ENCODE measurements at regions of chr20 and their contacts with region 1.

Region 1: DNA sequence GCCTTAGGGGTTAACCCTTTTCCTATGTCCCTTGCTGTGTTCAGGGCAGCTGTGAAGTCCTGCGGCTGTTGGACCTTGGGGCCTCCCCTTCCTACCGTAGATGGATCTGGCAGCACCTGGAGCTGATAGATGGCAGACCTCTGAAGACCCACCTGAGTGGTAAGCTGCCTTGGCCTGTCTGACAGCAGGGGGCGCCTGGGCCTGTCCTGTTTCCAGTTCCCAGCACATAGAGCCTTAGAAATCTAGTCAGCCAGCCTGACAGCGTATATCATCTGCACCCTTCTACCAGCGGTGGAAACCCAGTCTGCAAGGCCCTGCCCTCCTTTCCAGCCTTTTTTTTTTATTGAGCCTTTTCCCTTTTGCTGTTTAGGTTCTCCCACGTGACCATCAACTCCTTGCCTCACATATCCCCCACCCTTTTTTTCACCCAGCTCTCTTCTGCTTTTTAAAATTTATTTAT is 26.6 kb downstream of the CNBD2 start:
- DNase-seq: peak; percentile 76
- ATAC-seq: peak; percentile 94
- H3K4me3 ChIP-seq: no peak overlapping the region
- H3K27ac ChIP-seq: no peak overlapping the region
- H3K4me1 ChIP-seq: no peaks in the 10 kb centered on the region
- H3K27me3 ChIP-seq: peaks cover 3% of the 10 kb centered on the region; the same call in 1 of the 2 replicates
- CTCF ChIP-seq: peak; percentile 84
- POLR2A ChIP-seq: no peak
- RAD21 ChIP-seq: peak; percentile 92

Region 2: DNA sequence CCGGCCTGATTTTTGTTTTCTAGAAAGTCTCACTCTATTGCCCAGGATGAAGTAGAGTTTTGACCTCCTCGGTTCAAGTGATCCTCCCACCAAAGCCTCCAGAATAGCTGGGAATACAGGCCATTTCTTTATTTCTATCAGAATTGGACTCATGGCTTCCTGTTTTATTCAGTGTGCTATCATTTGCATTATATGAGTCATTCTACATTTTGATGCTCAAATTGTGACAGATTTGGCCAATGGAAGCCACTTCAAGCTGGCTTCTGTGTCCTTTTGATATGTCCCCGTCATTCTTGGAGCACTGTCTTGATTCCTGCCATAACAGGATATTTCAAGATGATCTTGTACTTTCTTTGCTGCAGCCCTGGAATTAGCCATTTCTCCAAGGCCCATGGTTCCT is 48.4 kb after region 1 on chr20:
- CTCF ChIA-PET with region 1: interaction called, 3 read pairs
- POLR2A ChIA-PET with region 1: interaction called, 15 read pairs
- dilution Hi-C with region 1: no loop called
- in situ Hi-C with region 1: no loop called
- intact Hi-C with region 1: no loop called
- DNase-seq: no peak
- ATAC-seq: no peak
- H3K4me3 ChIP-seq: no peak overlapping the region
- H3K27ac ChIP-seq: no peak overlapping the region
- H3K4me1 ChIP-seq: no peaks in the 10 kb centered on the region
- H3K27me3 ChIP-seq: no peaks in the 10 kb centered on the region
- CTCF ChIP-seq: no peak
- POLR2A ChIP-seq: no peak
- RAD21 ChIP-seq: no peak

Region 3: DNA sequence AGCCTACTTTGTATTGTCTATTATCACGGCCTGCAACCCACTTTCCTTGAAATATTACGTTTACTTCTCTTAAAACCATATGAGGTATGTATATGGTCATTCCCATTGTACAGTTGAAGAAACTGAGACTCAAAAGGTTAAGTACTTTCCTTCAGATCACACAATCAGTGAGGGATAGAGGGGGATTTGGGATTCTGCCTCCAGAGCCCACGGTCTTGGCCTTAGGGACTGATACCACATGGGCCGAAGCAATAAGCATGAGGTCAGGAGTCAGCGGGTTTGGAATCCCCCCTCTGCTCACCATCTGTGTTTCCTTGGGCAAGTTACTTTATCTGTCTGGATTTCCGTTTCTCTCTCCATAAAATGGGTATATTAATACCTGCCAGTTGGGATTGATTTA is 140.1 kb after region 1 on chr20:
- CTCF ChIA-PET with region 1: interaction called, 90 read pairs
- POLR2A ChIA-PET with region 1: interaction called, 4 read pairs
- dilution Hi-C with region 1: no loop called
- in situ Hi-C with region 1: loop called (anchors 5 kb)
- intact Hi-C with region 1: loop called (anchors 1 kb)
- DNase-seq: no peak
- ATAC-seq: no peak
- H3K4me3 ChIP-seq: no peak overlapping the region
- H3K27ac ChIP-seq: no peak overlapping the region
- H3K4me1 ChIP-seq: no peaks in the 10 kb centered on the region
- H3K27me3 ChIP-seq: no peaks in the 10 kb centered on the region
- CTCF ChIP-seq: no peak
- POLR2A ChIP-seq: no peak
- RAD21 ChIP-seq: no peak

Region 4: DNA sequence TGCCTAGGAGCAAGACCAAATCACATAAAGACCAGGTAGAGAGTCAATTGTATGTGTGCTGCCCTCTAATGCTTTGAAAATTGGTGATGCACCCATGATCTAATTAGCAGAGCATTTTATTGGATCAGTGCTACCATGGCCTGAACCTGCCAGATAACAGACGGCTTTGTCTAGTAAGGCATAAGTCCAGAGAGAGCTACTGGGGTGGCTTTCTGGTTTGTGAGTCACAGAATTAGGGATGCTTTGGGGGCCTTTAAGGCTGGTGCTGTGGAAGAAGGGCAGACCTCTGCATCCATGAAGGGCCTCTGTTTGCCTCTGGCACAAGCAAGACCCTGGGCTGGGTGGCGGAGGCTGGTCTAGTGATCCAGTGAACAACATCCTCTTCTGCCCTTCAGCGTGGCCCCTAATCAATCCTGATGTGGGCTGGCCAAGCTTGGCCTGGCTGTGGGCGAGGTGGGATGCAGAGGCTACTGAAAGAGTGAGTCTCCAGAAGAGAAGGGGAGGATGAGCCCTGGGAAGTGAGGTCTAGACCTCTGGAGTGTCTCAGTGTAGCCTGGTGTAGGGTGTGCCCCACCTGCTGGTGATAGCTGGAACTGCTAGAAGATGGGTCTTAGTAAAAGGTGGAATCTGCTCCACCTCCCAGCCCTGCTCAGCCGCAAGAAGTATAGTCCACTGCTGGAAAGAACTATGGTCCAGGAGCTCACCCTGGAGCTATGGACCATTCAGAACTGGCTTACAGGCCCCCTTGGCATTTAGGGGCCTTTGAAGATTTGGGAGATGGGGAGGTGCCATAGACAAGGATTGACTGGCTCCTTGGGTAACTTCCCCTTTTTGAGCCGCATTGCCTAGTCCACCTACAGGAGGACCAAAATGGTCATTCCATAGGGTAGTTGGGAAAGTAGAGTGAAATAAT is 204.6 kb after region 1 on chr20:
- CTCF ChIA-PET with region 1: interaction called, 5 read pairs
- POLR2A ChIA-PET with region 1: no interaction called
- dilution Hi-C with region 1: no loop called
- in situ Hi-C with region 1: no loop called
- intact Hi-C with region 1: loop called (anchors 1 kb)
- DNase-seq: peak; percentile 75
- ATAC-seq: peak; percentile 99
- H3K4me3 ChIP-seq: no peak overlapping the region
- H3K27ac ChIP-seq: no peak overlapping the region
- H3K4me1 ChIP-seq: no peaks in the 10 kb centered on the region
- H3K27me3 ChIP-seq: no peaks in the 10 kb centered on the region
- CTCF ChIP-seq: peak; percentile 92
- POLR2A ChIP-seq: no peak
- RAD21 ChIP-seq: peak; percentile 90